ENCODE measurements at regions of chr3 and their contacts with region 1.

Region 1: GRCh38 chr3:61927332-61927731 is 366.0 kb downstream of the PTPRG start:
- DNase-seq: peak; percentile 74 to 91
- ATAC-seq: peak; percentile 89 to 95 (median 91)
- H3K4me3 ChIP-seq: peak overlapping the region in 4 of 10 donors; percentile 0 to 28 (median 8)
- H3K27ac ChIP-seq: peak overlapping the region; percentile 51 to 81 (median 74)
- H3K4me1 ChIP-seq: peaks cover 22 to 73% (median 53%) of the 10 kb centered on the region in 9 donors
- H3K27me3 ChIP-seq: no peaks in the 10 kb centered on the region
- CTCF ChIP-seq: no peak

Region 2: GRCh38 chr3:61858056-61858455 is 69.3 kb before region 1 on chr3:
- intact Hi-C with region 1: loop called in 3 of 10 experiments (anchors 5 to 10 kb)
- DNase-seq: no peak
- ATAC-seq: peak in 6 of 8 donors; percentile 44 to 63 (median 59)
- H3K4me3 ChIP-seq: no peak overlapping the region
- H3K27ac ChIP-seq: peak overlapping the region in 1 of 10 donors; percentile 10
- H3K4me1 ChIP-seq: peaks cover 5 to 87% (median 46%) of the 10 kb centered on the region in 9 donors
- H3K27me3 ChIP-seq: no peaks in the 10 kb centered on the region
- CTCF ChIP-seq: peak; percentile 27 to 79 (median 58)

Region 3: GRCh38 chr3:61979638-61980037 is 52.3 kb after region 1 on chr3:
- intact Hi-C with region 1: no loop called
- DNase-seq: no peak
- ATAC-seq: peak in 4 of 8 donors; percentile 44 to 59 (median 49)
- H3K4me3 ChIP-seq: no peak overlapping the region
- H3K27ac ChIP-seq: peak overlapping the region in 5 of 10 donors; percentile 1 to 47 (median 31)
- H3K4me1 ChIP-seq: peaks cover 5 to 77% (median 49%) of the 10 kb centered on the region in 9 donors
- H3K27me3 ChIP-seq: no peaks in the 10 kb centered on the region
- CTCF ChIP-seq: no peak

Region 4: GRCh38 chr3:62159709-62160092 is 232.4 kb after region 1 on chr3:
- intact Hi-C with region 1: loop called in 1 of 10 experiments (anchors 10 kb)
- DNase-seq: peak; percentile 64 to 86
- ATAC-seq: peak; percentile 89 to 96 (median 94)
- H3K4me3 ChIP-seq: no peak overlapping the region
- H3K27ac ChIP-seq: peak overlapping the region; percentile 64 to 94 (median 84)
- H3K4me1 ChIP-seq: peaks cover 13 to 84% (median 58%) of the 10 kb centered on the region in 9 donors
- H3K27me3 ChIP-seq: no peaks in the 10 kb centered on the region
- CTCF ChIP-seq: no peak

Measured in heart right ventricle (tissue), 16 donors.